Endothelial cell of umbilical vein (primary cell): ENCODE measurements at regions of chr5 and their contacts with region 1.

Region 1: GRCh38 chr5:149114403-149115312 is 26.6 kb upstream of the ABLIM3 start:
- DNase-seq: peak; percentile 88
- H3K4me3 ChIP-seq: no peak overlapping the region
- H3K27ac ChIP-seq: no peak overlapping the region
- H3K4me1 ChIP-seq: peaks cover 6% of the 10 kb centered on the region
- H3K27me3 ChIP-seq: no peaks in the 10 kb centered on the region
- CTCF ChIP-seq: peak; percentile 83 to 88
- POLR2A ChIP-seq: no peak

Region 2: GRCh38 chr5:148179234-148179824 is 935.3 kb before region 1 on chr5:
- CTCF ChIA-PET with region 1: no interaction called
- POLR2A ChIA-PET with region 1: no interaction called
- dilution Hi-C with region 1: no loop called
- intact Hi-C with region 1: loop called (anchors 1 kb)
- DNase-seq: peak; percentile 78
- H3K4me3 ChIP-seq: no peak overlapping the region
- H3K27ac ChIP-seq: no peak overlapping the region
- H3K4me1 ChIP-seq: no peaks in the 10 kb centered on the region
- H3K27me3 ChIP-seq: no peaks in the 10 kb centered on the region
- CTCF ChIP-seq: peak; percentile 53 to 56
- POLR2A ChIP-seq: no peak

Region 3: GRCh38 chr5:148805326-148806290 is 309.1 kb before region 1 on chr5:
- CTCF ChIA-PET with region 1: interaction called, 11 read pairs
- POLR2A ChIA-PET with region 1: no interaction called
- dilution Hi-C with region 1: no loop called
- intact Hi-C with region 1: loop called (anchors 5 kb)
- DNase-seq: peak; percentile 77
- H3K4me3 ChIP-seq: no peak overlapping the region
- H3K27ac ChIP-seq: peak overlapping the region; percentile 10
- H3K4me1 ChIP-seq: peaks cover 35% of the 10 kb centered on the region
- H3K27me3 ChIP-seq: no peaks in the 10 kb centered on the region
- CTCF ChIP-seq: no peak
- POLR2A ChIP-seq: no peak

Region 4: DNA sequence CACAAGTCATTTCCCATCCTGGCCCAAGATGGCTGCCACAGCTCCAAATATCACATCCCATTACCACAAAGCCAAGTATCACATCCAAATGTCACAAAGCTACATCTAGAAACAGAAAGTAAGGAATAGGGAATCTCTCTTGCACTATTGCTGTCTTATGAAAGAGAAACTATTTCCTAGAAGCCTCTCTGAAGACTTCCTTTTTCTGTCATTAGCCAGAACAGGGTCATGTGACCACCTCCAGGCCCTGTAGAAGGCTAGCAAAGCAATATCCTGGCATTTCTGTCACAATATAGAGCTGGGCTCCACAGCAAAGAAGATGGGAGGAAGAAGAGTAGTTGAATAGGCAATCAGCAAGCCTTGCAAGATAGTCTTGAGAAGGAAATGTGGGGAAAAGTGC is 151.0 kb before region 1 on chr5:
- CTCF ChIA-PET with region 1: interaction called, 92 read pairs
- POLR2A ChIA-PET with region 1: no interaction called
- dilution Hi-C with region 1: no loop called
- intact Hi-C with region 1: no loop called
- DNase-seq: no peak
- H3K4me3 ChIP-seq: no peak overlapping the region
- H3K27ac ChIP-seq: no peak overlapping the region
- H3K4me1 ChIP-seq: peaks cover 16% of the 10 kb centered on the region
- H3K27me3 ChIP-seq: no peaks in the 10 kb centered on the region
- CTCF ChIP-seq: no peak
- POLR2A ChIP-seq: no peak

Region 5: DNA sequence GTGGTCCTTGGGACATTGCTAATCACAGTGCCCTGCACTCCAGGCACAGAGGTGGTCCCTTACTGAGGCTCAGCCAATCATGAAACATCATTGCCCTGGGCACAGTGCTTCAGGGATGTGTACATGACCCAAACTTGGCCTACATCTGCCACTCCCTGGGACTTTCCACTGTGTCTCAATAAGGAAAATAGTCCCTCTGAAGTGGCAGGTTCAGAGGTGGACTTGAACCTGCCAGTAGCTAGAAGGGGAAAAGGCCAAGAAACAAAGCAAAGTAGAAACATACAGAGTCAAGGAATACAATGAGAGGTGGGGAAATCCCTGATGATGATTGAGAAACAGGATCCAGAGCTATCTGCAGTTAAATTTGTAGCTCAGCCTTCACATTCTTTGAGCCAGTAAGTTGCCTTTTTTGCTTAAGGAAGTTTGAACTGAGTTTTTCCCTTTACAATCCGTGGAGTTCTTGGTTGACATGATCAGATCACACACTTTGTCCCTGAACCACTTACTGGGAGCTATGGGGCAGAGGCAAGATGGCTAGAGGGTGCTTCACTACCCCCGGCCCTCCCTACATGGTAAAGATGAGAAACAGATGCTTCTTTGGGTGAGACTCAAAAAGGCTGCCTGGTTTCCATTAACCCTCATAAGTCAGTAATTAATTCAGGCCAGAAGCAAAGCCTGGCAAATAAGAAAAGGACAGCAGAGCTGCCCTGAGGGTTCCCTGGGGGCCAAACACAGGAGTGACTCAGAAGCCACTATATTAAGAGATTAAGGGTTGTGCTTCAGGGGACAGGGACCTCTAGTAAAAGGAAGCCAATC is 109.4 kb before region 1 on chr5:
- CTCF ChIA-PET with region 1: interaction called, 138 read pairs
- POLR2A ChIA-PET with region 1: no interaction called
- dilution Hi-C with region 1: no loop called
- intact Hi-C with region 1: loop called (anchors 1 kb)
- DNase-seq: no peak
- H3K4me3 ChIP-seq: no peak overlapping the region
- H3K27ac ChIP-seq: no peak overlapping the region
- H3K4me1 ChIP-seq: peaks cover 7% of the 10 kb centered on the region
- H3K27me3 ChIP-seq: no peaks in the 10 kb centered on the region
- CTCF ChIP-seq: no peak
- POLR2A ChIP-seq: no peak

Region 6: DNA sequence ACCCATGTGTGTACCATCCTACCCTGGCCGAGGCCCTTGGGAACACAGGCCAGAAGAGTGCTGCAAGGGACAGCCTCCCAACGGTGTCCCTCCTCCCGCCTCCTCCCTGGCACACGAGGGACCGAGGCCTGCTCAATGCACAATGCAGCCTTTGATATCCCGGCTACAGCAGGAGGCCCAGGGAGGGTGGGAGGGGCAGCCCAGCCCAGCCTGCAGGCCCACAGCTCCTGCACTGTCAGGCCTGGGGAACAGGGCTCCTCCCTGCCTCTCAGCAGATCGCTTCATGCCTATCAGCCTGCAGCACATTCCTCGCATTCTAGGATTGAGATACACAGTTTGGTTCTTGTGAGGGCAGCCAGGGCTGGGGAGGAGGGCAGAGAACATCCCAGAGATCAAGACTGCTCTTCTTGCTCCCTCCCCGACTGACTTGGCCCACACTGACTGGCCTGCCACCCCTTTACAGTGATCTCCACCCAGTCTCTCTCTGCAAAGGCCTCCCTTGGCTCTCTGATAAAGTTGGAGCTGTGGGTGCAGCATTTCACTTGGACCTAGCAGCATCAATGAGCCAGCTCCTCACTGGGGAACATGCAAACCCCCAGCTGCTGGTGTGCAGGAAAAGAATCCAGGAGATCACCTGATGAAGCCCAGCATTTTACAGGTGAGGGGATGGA is 51.5 kb before region 1 on chr5 and contains the start of gene SH3TC2:
- CTCF ChIA-PET with region 1: interaction called, 20 read pairs
- POLR2A ChIA-PET with region 1: no interaction called
- dilution Hi-C with region 1: no loop called
- intact Hi-C with region 1: loop called (anchors 1 kb)
- DNase-seq: peak; percentile 28
- H3K4me3 ChIP-seq: no peak within 1 kb of the TSS
- H3K27ac ChIP-seq: peak within 1 kb of the TSS; percentile 97
- H3K4me1 ChIP-seq: peaks cover 39% of the 10 kb centered on the region
- H3K27me3 ChIP-seq: no peaks in the 10 kb centered on the region
- CTCF ChIP-seq: no peak
- POLR2A ChIP-seq: peak; percentile 18
- total RNA-seq, gene SH3TC2: 3.3 and 4.3 TPM in 2 replicates

Region 7: DNA sequence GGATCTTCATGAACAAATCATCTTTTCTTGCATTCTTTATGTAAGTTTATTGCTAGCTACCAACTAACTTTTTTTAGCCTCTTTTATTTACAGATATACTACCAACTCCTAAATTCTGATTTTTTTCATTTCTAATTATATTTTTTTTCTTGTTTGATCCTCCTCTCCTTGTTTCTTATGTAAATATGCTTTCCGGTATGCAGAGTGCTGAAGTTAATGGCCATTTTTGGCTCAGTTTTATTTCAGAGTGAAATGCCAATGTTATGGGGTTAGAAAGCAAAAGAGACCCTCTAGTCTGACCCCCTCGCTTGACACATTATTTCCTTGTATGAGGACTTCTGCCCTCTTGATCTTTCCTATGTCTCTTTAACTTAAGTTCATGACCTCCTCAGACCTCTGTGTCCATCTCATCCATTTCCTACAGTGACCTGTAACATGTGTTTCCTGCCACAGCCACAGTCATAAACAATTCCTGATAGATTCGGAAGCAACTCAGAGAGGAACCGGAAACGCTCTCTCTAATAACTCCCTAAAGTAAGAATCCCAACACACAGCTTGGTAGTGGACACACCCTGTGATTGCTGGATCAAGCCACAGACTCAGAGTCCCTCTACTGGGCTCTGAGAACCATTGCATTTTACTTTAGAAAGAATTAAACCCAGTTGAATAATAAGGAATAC is 114.1 kb after region 1 on chr5:
- CTCF ChIA-PET with region 1: interaction called, 20 read pairs
- POLR2A ChIA-PET with region 1: no interaction called
- dilution Hi-C with region 1: no loop called
- intact Hi-C with region 1: loop called (anchors 1 kb)
- DNase-seq: peak; percentile 84
- H3K4me3 ChIP-seq: no peak overlapping the region
- H3K27ac ChIP-seq: peak overlapping the region; percentile 42
- H3K4me1 ChIP-seq: peaks cover 30% of the 10 kb centered on the region
- H3K27me3 ChIP-seq: no peaks in the 10 kb centered on the region
- CTCF ChIP-seq: peak; percentile 64 to 73
- POLR2A ChIP-seq: no peak

Region 8: GRCh38 chr5:150066901-150067396 is 952.3 kb after region 1 on chr5:
- CTCF ChIA-PET with region 1: no interaction called
- POLR2A ChIA-PET with region 1: no interaction called
- dilution Hi-C with region 1: no loop called
- intact Hi-C with region 1: no loop called
- DNase-seq: no peak
- H3K4me3 ChIP-seq: no peak overlapping the region
- H3K27ac ChIP-seq: no peak overlapping the region
- H3K4me1 ChIP-seq: peaks cover 29% of the 10 kb centered on the region
- H3K27me3 ChIP-seq: no peaks in the 10 kb centered on the region
- CTCF ChIP-seq: no peak
- POLR2A ChIP-seq: no peak